Posterior cingulate gyrus (tissue), 11 donors: ENCODE measurements at regions of chr12 and their contacts with region 1.

Region 1: DNA sequence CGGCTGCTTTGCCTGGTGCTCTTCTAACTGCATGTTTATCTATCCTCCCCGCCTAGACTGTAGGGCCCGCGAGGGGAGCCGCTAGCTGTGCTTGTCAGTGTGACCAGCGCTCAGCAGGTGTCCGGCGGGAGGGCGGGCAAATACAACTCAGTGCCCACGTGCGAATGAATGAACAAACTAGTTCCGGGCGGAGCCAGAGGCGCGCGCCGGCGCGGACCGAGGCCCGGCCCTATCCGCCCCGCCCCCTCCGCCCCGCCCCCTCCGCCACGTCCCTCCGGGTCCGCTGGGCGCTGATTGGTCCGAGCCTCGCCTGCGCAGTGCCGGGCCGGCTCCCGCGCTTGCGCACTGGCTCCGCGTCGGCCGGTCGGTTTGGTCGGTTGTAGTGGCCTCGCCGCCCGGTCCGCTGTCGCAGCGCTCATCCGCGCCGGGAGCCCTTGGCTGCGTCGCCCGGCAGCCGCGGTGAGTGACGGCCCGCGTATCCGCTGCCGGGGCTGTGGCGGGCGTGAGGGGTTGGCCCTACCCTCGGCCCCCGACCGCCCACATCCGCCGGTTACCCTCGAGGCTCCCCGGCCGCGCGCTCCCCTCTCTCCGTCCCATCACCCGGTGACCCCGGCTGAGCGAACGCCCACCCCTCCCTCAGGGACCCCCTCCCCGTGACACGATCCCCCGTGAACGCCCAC is 60.0 kb downstream of the DDX51 start:
- DNase-seq: peak; percentile 84 to 98 (median 90)

Region 2: DNA sequence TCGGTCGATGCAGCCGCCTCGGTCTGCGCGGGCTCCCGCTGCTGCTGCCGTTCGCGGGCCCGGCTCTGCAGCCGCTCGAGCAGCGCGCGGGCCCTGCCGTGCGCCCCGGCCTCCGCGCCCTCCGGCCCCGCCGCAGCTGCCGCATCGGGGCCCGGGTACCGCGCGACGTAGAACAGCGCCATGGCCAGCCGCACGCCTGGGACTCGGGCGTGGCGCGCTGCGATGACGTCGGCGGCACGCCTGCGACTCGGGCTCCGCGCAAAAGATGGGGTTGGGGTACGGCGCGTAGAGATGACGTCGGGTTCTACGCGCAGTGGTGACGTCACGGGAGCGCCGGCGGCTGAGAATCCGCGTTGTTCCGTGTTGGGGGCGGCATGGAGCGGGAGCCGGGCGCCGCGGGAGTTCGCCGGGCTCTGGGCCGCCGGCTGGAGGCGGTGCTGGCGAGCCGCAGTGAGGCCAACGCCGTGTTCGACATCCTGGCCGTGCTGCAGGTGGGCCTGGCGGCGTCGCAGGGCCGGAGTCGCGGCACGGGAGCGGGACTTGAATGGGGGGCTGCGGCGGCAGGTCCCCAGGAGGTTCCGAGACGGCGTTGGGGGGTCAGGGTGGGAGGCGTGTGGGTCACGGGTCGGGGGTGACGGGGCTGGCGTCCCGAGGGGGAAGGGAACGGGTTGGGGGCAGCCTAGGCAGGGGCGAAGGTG is 60.2 kb after region 1 on chr12 and contains the starts of genes DDX51 and NOC4L:
- intact Hi-C with region 1: loop called (anchors 2 kb)
- DNase-seq: peak; percentile 89 to 99 (median 92)